Naive thymus-derived CD4-positive, alpha-beta T cell (primary cell): ENCODE measurements at regions of chr11 and their contacts with region 1.

Region 1: DNA sequence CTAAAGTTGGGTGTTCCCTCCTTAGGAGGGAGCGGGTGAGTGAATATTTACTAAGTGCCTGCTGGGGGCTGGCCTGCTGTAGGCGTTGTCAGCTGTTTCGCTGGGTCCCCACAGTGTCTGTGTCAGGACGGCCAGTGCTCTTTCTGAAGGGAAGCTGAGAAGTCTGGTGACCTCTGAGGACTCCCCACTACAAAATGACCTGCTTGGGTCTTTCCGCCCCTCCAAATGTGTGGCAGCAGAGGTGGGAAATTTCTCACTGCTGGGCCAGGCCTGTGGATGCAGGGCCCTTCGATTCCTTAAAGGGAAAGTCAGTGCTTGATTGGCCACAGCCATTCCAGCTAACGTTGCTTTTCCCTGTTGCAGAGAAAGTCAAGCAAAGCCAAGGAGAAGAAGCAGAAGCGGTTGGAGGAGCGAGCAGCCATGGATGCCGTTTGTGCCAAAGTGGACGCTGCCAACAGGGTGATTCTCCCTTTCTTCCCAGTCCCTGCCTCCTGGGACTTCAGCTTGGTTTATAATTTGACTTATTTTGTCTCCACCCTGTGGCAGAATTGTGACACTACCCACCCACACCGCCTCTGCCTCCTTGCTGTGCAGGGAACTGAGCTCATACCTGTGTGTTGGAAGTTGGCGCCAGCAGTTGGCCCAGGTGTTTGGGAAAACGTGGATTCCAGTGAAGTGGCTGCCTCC is 6.8 kb downstream of the NAA40 start:
- DNase-seq: peak in 8 of 9 donors; percentile 33 to 57 (median 48)
- ATAC-seq: peak; percentile 84
- H3K4me3 ChIP-seq: no peak overlapping the region
- H3K4me3 Mint-ChIP-seq: no peak overlapping the region
- H3K27ac ChIP-seq: no peak overlapping the region
- H3K27ac Mint-ChIP-seq: peak overlapping the region in 1 of 9 donors; percentile 23
- H3K4me1 ChIP-seq: no peaks in the 10 kb centered on the region
- H3K4me1 Mint-ChIP-seq: peaks cover 7 to 22% (median 11%) of the 10 kb centered on the region in 7 donors
- H3K27me3 ChIP-seq: no peaks in the 10 kb centered on the region
- H3K27me3 Mint-ChIP-seq: no peaks in the 10 kb centered on the region

Region 2: DNA sequence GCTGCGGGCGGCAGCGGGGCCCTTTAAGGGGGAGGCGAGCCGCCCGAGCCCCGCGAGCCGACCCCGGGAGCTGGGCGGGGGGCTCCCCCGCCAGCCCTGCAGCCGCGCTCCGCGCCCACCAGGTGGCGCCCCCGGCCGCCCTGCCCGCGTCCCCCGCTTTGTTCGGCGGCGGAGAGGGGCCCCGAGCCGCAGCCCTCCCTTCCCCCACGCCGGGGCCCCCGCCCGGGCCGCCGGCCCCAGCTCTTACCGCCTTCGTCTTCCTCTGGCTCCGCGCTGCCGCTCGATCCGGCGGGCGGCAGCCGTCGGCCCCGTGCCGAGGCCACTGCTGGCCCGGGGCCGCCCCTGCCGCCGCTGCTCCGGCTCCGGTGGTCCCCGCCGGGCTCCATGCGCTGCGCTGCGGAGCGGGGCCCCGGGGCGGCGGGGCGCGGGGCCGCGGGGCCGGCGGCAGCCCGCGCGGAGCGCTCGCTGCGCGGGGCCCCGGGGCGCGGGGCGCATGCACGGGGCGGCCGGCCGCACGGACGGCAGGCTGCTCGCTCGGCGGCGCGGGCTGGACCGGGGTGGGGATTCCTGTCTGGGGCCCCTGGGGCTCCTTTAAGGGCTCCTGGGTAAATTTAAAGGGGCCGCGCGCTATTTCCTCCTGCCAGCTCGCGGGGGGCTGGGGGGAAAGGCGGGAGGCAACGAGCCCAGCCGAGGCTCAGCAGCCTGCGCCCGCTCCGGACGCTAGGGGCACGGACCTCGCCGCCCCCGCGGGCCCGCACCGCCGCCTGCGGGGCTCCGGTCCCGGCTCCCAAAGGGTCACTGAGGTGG is 177.2 kb before region 1 on chr11 and contains the start of gene ZFTA:
- CTCF ChIA-PET with region 1: interaction called, 3 read pairs
- POLR2A ChIA-PET with region 1: no interaction called
- intact Hi-C with region 1: loop called (anchors 1 to 2 kb)
- DNase-seq: peak; percentile 34 to 79 (median 54)
- ATAC-seq: peak; percentile 84
- H3K4me3 ChIP-seq: peak within 1 kb of the TSS; percentile 77
- H3K4me3 Mint-ChIP-seq: peak within 1 kb of the TSS; percentile 87 to 99 (median 92)
- H3K27ac ChIP-seq: peak within 1 kb of the TSS; percentile 60
- H3K27ac Mint-ChIP-seq: peak within 1 kb of the TSS; percentile 34 to 94 (median 83)
- H3K4me1 ChIP-seq: peaks cover 6 to 9% of the 10 kb centered on the region in 2 donors
- H3K4me1 Mint-ChIP-seq: peaks cover 6 to 14% (median 8%) of the 10 kb centered on the region in 7 donors
- H3K27me3 ChIP-seq: peaks cover 0 to 9% of the 10 kb centered on the region in 2 donors
- H3K27me3 Mint-ChIP-seq: peaks cover 0 to 35% (median 9%) of the 10 kb centered on the region in 5 donors
- total RNA-seq, gene ZFTA: 2.1 to 3.6 (median 2.7) TPM

Region 3: DNA sequence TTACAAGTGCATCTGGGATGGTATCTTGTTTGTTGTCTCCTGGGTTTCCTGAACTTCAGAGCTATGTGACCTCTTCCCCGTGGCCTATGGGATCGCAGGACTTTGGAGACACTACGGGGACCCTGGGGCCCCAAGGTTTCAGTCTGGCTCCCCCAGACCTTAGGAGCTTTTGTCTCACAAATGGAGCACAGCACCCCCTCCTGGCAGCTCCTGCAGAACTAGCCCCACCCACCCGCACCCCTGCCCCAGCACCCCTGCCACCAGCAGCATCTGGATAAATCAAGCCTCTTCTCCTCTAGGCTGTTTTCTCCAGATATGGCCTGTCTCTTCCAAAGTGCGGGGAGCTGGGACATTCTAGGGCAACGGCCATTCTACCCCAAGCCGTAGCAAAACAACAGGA is 39.0 kb before region 1 on chr11:
- CTCF ChIA-PET with region 1: interaction called, 4 read pairs
- POLR2A ChIA-PET with region 1: no interaction called
- intact Hi-C with region 1: loop called in 1 of 2 experiments (anchors 2 kb)
- DNase-seq: peak in 7 of 9 donors; percentile 38 to 65 (median 60)
- ATAC-seq: peak; percentile 70
- H3K4me3 ChIP-seq: no peak overlapping the region
- H3K4me3 Mint-ChIP-seq: no peak overlapping the region
- H3K27ac ChIP-seq: no peak overlapping the region
- H3K27ac Mint-ChIP-seq: peak overlapping the region in 4 of 9 donors; percentile 17 to 80 (median 61)
- H3K4me1 ChIP-seq: no peaks in the 10 kb centered on the region
- H3K4me1 Mint-ChIP-seq: peaks cover 0 to 6% (median 3%) of the 10 kb centered on the region in 7 donors
- H3K27me3 ChIP-seq: no peaks in the 10 kb centered on the region
- H3K27me3 Mint-ChIP-seq: no peaks in the 10 kb centered on the region

Region 4: DNA sequence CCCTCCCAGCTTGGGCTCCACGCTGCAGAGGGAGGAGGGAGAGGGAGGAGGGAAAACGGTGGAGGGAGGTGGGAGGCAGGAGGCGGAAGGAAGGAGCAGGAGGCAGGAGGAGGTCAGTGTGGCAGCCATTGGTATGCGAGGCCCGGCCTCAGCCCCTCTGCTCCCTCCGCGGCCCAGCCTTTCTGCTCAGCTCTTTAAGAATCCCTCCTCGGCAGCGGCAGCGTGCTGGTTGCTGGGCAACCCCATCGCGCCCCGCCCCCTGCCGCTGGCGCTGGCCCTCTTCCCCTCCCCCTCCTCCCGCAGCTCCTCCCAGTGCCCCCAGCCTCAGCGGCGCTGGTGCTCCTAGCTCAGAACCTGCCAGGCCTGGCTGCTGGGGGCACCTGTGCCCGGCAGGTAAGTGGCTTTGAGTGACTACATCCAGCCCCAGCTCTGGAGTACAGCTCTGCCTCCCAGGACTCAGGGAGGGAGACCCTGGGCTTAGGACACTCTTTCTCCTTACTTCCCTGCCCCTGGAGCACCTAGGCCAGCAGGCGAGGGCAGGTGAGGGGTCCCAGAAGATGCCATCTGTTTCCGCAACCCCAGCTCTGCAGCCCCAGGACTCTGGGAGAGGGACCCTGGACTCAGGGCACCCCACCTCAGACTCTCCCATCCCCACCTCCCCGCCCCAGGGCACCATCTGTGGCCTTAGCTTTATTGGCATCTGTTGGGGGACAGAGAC is 82.9 kb after region 1 on chr11:
- CTCF ChIA-PET with region 1: no interaction called
- POLR2A ChIA-PET with region 1: no interaction called
- intact Hi-C with region 1: no loop called
- DNase-seq: peak in 1 of 9 donors; percentile 7
- ATAC-seq: no peak
- H3K4me3 ChIP-seq: no peak overlapping the region
- H3K4me3 Mint-ChIP-seq: no peak overlapping the region
- H3K27ac ChIP-seq: no peak overlapping the region
- H3K27ac Mint-ChIP-seq: no peak overlapping the region
- H3K4me1 ChIP-seq: no peaks in the 10 kb centered on the region
- H3K4me1 Mint-ChIP-seq: peaks cover 0 to 4% (median 0%) of the 10 kb centered on the region in 7 donors
- H3K27me3 ChIP-seq: no peaks in the 10 kb centered on the region
- H3K27me3 Mint-ChIP-seq: peaks cover 7 to 21% (median 11%) of the 10 kb centered on the region in 5 donors

Region 5: GRCh38 chr11:64040684-64041322 is 95.2 kb after region 1 on chr11:
- CTCF ChIA-PET with region 1: no interaction called
- POLR2A ChIA-PET with region 1: no interaction called
- intact Hi-C with region 1: no loop called
- DNase-seq: no peak
- ATAC-seq: no peak
- H3K4me3 ChIP-seq: no peak overlapping the region
- H3K4me3 Mint-ChIP-seq: no peak overlapping the region
- H3K27ac ChIP-seq: no peak overlapping the region
- H3K27ac Mint-ChIP-seq: no peak overlapping the region
- H3K4me1 ChIP-seq: no peaks in the 10 kb centered on the region
- H3K4me1 Mint-ChIP-seq: no peaks in the 10 kb centered on the region
- H3K27me3 ChIP-seq: no peaks in the 10 kb centered on the region
- H3K27me3 Mint-ChIP-seq: peaks cover 0 to 23% (median 17%) of the 10 kb centered on the region in 5 donors